ENCODE measurements at regions of chr2 and their contacts with region 1.

Region 1: GRCh38 chr2:70861777-70862625 is 26.4 kb upstream of the CD207 start:
- DNase-seq: peak in 1 of 2 experiments; percentile 97
- H3K4me3 ChIP-seq: no peak overlapping the region
- H3K27ac ChIP-seq: no peak overlapping the region
- H3K4me1 ChIP-seq: no peaks in the 10 kb centered on the region
- H3K27me3 ChIP-seq: peaks cover 0 to 24% (median 12%) of the 10 kb centered on the region in 4 experiments; a peak in 6 of 7 replicates
- CTCF ChIP-seq: peak; percentile 97 to 99 (median 97)
- EP300 ChIP-seq: no peak; a peak in 1 of 3 replicates
- POLR2A ChIP-seq: no peak
- RAD21 ChIP-seq: peak; percentile 86 to 94

Region 2: GRCh38 chr2:70797506-70797905 is 64.5 kb before region 1 on chr2:
- CTCF ChIA-PET with region 1: interaction called, 91 read pairs
- POLR2A ChIA-PET with region 1: interaction called, 4 read pairs
- DNase-seq: no peak
- H3K4me3 ChIP-seq: no peak overlapping the region
- H3K27ac ChIP-seq: no peak overlapping the region
- H3K4me1 ChIP-seq: peaks cover 0 to 3% (median 0%) of the 10 kb centered on the region in 4 experiments; a peak in 1 of 7 replicates
- H3K27me3 ChIP-seq: peaks cover 2 to 17% (median 5%) of the 10 kb centered on the region in 4 experiments; a peak in 4 of 7 replicates
- CTCF ChIP-seq: no peak
- EP300 ChIP-seq: no peak
- POLR2A ChIP-seq: no peak
- RAD21 ChIP-seq: no peak

Region 3: GRCh38 chr2:70842401-70842800 is 19.6 kb before region 1 on chr2:
- CTCF ChIA-PET with region 1: interaction called, 11 read pairs
- POLR2A ChIA-PET with region 1: interaction called, 4 read pairs
- DNase-seq: no peak
- H3K4me3 ChIP-seq: no peak overlapping the region
- H3K27ac ChIP-seq: no peak overlapping the region
- H3K4me1 ChIP-seq: no peaks in the 10 kb centered on the region; a peak in 1 of 7 replicates
- H3K27me3 ChIP-seq: no peaks in the 10 kb centered on the region
- CTCF ChIP-seq: no peak
- EP300 ChIP-seq: no peak
- POLR2A ChIP-seq: no peak
- RAD21 ChIP-seq: no peak

Region 4: GRCh38 chr2:70851704-70852103 is 10.3 kb before region 1 on chr2:
- CTCF ChIA-PET with region 1: interaction called, 13 read pairs
- POLR2A ChIA-PET with region 1: no interaction called
- DNase-seq: no peak
- H3K4me3 ChIP-seq: no peak overlapping the region
- H3K27ac ChIP-seq: no peak overlapping the region
- H3K4me1 ChIP-seq: no peaks in the 10 kb centered on the region
- H3K27me3 ChIP-seq: no peaks in the 10 kb centered on the region
- CTCF ChIP-seq: no peak
- EP300 ChIP-seq: no peak
- POLR2A ChIP-seq: no peak
- RAD21 ChIP-seq: no peak

Region 5: DNA sequence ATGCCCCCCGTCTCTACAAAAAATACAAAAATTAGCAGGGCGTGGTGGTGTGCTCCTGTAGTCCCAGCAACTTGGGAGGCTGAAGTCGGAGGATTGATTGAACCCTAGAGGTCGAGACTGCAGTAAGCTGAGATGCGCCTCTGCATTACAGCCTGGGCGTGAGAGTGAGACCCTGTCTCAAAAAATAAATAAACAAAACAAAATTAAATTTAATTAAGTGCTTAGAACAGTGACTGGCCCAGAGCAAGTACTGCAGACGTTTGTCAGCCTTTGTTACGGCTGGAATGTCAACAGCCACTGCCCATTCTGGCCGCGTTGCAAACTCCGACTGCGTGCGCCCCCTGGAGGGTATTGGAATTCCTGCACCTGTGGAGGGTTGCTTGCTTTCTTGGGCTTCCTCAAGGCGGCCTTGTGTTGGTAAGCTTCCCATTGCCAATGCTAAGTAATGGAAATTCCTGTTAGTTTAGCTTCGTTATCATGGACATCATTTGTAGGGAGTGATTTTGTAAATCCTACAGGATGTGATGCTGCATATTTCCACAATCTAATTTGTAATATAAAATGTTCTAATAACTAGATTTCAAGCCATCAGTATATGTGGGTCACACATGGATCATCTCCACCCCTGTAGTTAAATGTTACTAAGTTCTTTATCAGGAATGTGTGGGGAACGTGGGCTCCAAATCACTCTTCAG is 57.8 kb after region 1 on chr2:
- CTCF ChIA-PET with region 1: interaction called, 146 read pairs
- POLR2A ChIA-PET with region 1: no interaction called
- DNase-seq: peak; percentile 79 to 99
- H3K4me3 ChIP-seq: no peak overlapping the region
- H3K27ac ChIP-seq: no peak overlapping the region
- H3K4me1 ChIP-seq: peaks cover 0 to 8% (median 3%) of the 10 kb centered on the region in 4 experiments; a peak in 4 of 7 replicates
- H3K27me3 ChIP-seq: peaks cover 0 to 4% (median 0%) of the 10 kb centered on the region in 4 experiments; a peak in 1 of 7 replicates
- CTCF ChIP-seq: peak; percentile 91 to 98 (median 96)
- EP300 ChIP-seq: no peak
- POLR2A ChIP-seq: no peak
- RAD21 ChIP-seq: peak; percentile 77 to 82

Measured in H1 (cell line).